ENCODE measurements at regions of chr10 and their contacts with region 1.

Region 1: GRCh38 chr10:73956476-73957359 is 41.2 kb upstream of the VCL start:
- DNase-seq: peak; percentile 62
- ATAC-seq: peak; percentile 76
- H3K4me3 Mint-ChIP-seq: peak overlapping the region; percentile 60
- H3K27ac Mint-ChIP-seq: peak overlapping the region; percentile 89
- H3K4me1 Mint-ChIP-seq: peaks cover 53% of the 10 kb centered on the region
- H3K27me3 Mint-ChIP-seq: peaks cover 2% of the 10 kb centered on the region

Region 2: DNA sequence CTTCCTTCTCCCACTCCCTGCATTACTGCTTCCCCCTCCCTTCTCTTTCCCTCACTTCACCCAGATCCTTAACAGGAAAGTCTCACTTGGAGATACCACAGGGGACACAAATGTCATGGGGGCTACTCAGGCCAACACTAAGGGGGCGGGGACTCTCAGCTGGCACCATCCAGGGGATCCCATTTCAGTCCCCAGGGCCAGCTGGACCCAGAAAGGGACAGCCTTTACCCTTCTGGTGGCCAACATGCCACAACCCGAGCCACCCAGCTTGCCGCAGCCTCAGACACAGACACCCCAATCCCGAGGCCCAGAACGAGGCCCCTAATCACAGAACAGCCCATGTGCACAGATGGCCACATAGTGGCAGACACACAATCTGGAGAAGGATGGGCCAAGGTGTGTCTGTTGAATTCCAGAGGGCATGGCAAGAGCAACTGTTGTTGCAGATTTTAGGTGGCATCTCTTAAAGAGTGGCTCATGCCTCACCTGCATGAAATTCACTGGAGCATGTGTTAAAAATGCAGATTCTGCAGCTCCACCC is 88.0 kb before region 1 on chr10:
- CTCF ChIA-PET with region 1: no interaction called
- POLR2A ChIA-PET with region 1: no interaction called
- DNase-seq: no peak
- ATAC-seq: no peak
- H3K4me3 Mint-ChIP-seq: no peak overlapping the region
- H3K27ac Mint-ChIP-seq: peak overlapping the region; percentile 5
- H3K4me1 Mint-ChIP-seq: peaks cover 85% of the 10 kb centered on the region
- H3K27me3 Mint-ChIP-seq: no peaks in the 10 kb centered on the region

Region 3: DNA sequence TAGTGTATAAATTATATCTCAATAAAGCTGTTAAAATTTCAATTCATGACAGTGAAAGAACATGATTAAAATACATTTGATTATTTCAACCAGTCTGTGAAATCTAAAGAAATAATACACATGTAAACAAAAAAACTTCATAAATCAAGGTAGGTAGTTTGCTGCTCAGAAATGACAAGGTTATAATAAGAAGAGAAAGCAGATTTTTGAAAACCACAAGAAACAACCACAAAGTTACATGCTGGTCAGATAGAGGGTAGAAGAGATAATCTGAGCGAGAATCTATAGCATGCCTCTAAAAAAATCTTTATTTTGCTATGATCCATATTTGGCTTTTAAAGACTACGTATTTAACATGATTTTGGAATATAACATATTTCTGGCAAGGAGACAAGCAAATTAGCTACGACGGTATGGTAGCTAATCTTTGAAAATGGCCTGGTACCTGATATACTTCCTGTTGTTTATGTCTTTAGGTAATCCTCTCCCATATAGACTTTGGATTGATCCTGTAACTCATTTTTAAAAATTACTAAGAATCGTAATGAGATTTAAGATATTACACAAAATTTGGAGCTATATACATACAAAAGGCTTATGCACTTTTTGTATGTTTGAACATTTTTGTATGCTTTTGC is 17.7 kb after region 1 on chr10:
- CTCF ChIA-PET with region 1: interaction called, 17 read pairs
- POLR2A ChIA-PET with region 1: no interaction called
- DNase-seq: no peak
- ATAC-seq: peak; percentile 93
- H3K4me3 Mint-ChIP-seq: peak overlapping the region; percentile 46
- H3K27ac Mint-ChIP-seq: peak overlapping the region; percentile 64
- H3K4me1 Mint-ChIP-seq: peaks cover 23% of the 10 kb centered on the region
- H3K27me3 Mint-ChIP-seq: peaks cover 16% of the 10 kb centered on the region

Region 4: GRCh38 chr10:73991884-73992245 is 35.1 kb after region 1 on chr10:
- CTCF ChIA-PET with region 1: interaction called, 18 read pairs
- POLR2A ChIA-PET with region 1: interaction called, 3 read pairs
- DNase-seq: peak; percentile 96
- ATAC-seq: peak; percentile 100
- H3K4me3 Mint-ChIP-seq: peak overlapping the region; percentile 1
- H3K27ac Mint-ChIP-seq: peak overlapping the region; percentile 74
- H3K4me1 Mint-ChIP-seq: peaks cover 51% of the 10 kb centered on the region
- H3K27me3 Mint-ChIP-seq: peaks cover 7% of the 10 kb centered on the region

Region 5: DNA sequence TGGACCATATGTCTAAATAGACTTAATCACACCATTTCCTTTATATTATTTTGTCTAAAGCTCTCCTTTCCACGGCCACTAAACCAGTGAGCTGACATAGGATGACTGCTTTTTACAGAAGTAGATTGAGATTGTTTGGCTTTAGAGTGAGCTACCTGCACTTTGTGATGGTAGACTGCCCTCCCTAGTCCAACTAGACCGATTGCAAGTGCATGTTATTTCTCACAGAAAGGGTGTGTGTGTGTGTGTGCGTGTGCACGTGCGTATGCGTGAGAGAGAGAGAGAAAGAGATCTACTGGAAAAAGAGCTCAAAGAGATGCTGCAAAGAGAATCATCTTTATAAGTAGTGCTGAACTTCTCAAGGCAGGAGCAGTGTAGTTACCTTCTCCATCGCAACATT is 101.9 kb after region 1 on chr10:
- CTCF ChIA-PET with region 1: interaction called, 10 read pairs
- POLR2A ChIA-PET with region 1: no interaction called
- DNase-seq: peak; percentile 42
- ATAC-seq: peak; percentile 43
- H3K4me3 Mint-ChIP-seq: no peak overlapping the region
- H3K27ac Mint-ChIP-seq: peak overlapping the region; percentile 51
- H3K4me1 Mint-ChIP-seq: peaks cover 42% of the 10 kb centered on the region
- H3K27me3 Mint-ChIP-seq: no peaks in the 10 kb centered on the region

Measured in activated CD8-positive, alpha-beta T cell treated with anti-CD3 and anti-CD28 coated beads, Interleukin-2, amount 10 ng/mL, durations not matched to agents 7 days and 5 days (primary cell).